PC-3 (cell line): ENCODE measurements at regions of chr21 and their contacts with region 1.

Region 1: GRCh38 chr21:15631366-15631765 is 98.4 kb upstream of the USP25 start:
- DNase-seq: peak; percentile 81
- ATAC-seq: peak; percentile 88
- H3K4me3 ChIP-seq: no peak overlapping the region
- H3K27ac ChIP-seq: peak overlapping the region; percentile 47
- H3K4me1 ChIP-seq: peaks cover 20% of the 10 kb centered on the region
- H3K27me3 ChIP-seq: no peaks in the 10 kb centered on the region
- CTCF ChIP-seq: no peak

Region 2: DNA sequence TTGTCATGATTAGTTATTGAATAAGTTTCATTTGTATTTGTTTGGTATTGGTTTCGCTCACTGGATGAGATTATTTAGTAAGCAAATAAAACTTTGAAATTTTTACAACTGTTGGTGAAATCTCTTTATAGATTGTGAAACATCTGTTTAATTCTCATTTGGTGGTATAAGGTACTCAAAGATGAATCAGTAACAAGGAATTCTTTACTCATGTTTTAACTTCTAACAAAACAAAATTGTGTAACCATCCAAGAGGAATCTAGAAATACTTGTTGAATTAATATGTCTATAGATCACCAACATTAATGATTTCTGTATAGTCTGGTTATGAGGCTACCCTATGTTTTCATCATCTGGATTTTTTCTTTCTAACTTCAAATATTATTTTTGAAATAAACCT is 35.6 kb after region 1 on chr21:
- CTCF ChIA-PET with region 1: no interaction called
- POLR2A ChIA-PET with region 1: no interaction called
- intact Hi-C with region 1: loop called (anchors 5 kb)
- DNase-seq: peak; percentile 93
- ATAC-seq: peak; percentile 95
- H3K4me3 ChIP-seq: no peak overlapping the region
- H3K27ac ChIP-seq: peak overlapping the region; percentile 7
- H3K4me1 ChIP-seq: peaks cover 17% of the 10 kb centered on the region
- H3K27me3 ChIP-seq: no peaks in the 10 kb centered on the region
- CTCF ChIP-seq: no peak

Region 3: GRCh38 chr21:15706692-15707091 is 75.3 kb after region 1 on chr21:
- CTCF ChIA-PET with region 1: no interaction called
- POLR2A ChIA-PET with region 1: no interaction called
- intact Hi-C with region 1: loop called (anchors 1 kb)
- DNase-seq: peak; percentile 99
- ATAC-seq: peak; percentile 100
- H3K4me3 ChIP-seq: no peak overlapping the region
- H3K27ac ChIP-seq: peak overlapping the region; percentile 78
- H3K4me1 ChIP-seq: peaks cover 12% of the 10 kb centered on the region
- H3K27me3 ChIP-seq: no peaks in the 10 kb centered on the region
- CTCF ChIP-seq: no peak

Region 4: DNA sequence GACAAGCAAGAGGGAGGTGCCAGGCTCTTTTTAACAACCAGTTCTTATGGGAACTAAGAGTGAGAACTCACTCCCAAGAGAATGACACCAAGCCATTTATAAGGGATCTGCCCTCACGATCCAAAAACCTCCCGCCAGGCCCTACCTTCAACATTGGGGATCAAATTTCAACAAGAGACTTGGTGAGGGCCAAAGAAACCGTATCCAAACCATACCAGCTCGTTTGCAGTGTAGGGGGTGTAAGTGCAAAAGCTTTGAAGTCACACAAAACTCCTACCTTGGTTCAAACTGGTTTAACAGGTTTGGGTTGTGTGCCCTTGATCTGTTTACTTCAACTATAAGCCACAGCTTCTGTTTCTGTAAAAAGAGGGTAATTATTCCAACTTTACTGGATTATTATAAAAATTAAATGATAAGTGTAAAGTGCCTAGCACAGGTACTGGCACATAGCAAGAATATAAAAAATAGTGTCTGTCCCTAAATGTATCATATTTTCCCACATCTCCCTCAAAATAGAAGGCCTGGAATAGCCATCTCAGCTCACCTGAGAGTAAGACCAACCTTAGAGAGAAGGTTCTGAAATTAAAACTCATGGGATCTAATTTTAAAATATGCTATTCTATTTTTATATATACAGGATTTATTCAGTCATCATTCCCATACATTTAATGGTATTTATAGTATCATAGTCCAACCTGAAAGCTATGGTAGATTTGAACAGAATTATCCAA is 91.4 kb after region 1 on chr21:
- CTCF ChIA-PET with region 1: no interaction called
- POLR2A ChIA-PET with region 1: no interaction called
- intact Hi-C with region 1: no loop called
- DNase-seq: peak; percentile 84
- ATAC-seq: peak; percentile 81
- H3K4me3 ChIP-seq: no peak overlapping the region
- H3K27ac ChIP-seq: 0 out of 2 replicates have a peak overlapping the region, but pooled peaks have one; percentile 4
- H3K4me1 ChIP-seq: peaks cover 13% of the 10 kb centered on the region
- H3K27me3 ChIP-seq: no peaks in the 10 kb centered on the region
- CTCF ChIP-seq: no peak

Region 5: GRCh38 chr21:16678429-16679160 is 1047.2 kb after region 1 on chr21:
- CTCF ChIA-PET with region 1: no interaction called
- POLR2A ChIA-PET with region 1: no interaction called
- intact Hi-C with region 1: no loop called
- DNase-seq: no peak
- ATAC-seq: no peak
- H3K4me3 ChIP-seq: no peak overlapping the region
- H3K27ac ChIP-seq: no peak overlapping the region
- H3K4me1 ChIP-seq: no peaks in the 10 kb centered on the region
- H3K27me3 ChIP-seq: no peaks in the 10 kb centered on the region
- CTCF ChIP-seq: no peak